GM12878 (cell line): ENCODE measurements at regions of chr15 and their contacts with region 1.

Region 1: GRCh38 chr15:69679623-69680228 is 227.1 kb downstream of the RPLP1 start:
- DNase-seq: peak; percentile 89
- ATAC-seq: peak; percentile 98
- H3K4me3 ChIP-seq: no peak overlapping the region
- H3K27ac ChIP-seq: no peak overlapping the region
- H3K4me1 ChIP-seq: peaks cover 21% of the 10 kb centered on the region
- H3K27me3 ChIP-seq: no peaks in the 10 kb centered on the region; a peak in 1 of 4 replicates
- CTCF ChIP-seq: no peak
- EP300 ChIP-seq: peak; percentile 80 to 89; a peak in 3 of 4 replicates
- POLR2A ChIP-seq: no peak
- RAD21 ChIP-seq: no peak

Region 2: DNA sequence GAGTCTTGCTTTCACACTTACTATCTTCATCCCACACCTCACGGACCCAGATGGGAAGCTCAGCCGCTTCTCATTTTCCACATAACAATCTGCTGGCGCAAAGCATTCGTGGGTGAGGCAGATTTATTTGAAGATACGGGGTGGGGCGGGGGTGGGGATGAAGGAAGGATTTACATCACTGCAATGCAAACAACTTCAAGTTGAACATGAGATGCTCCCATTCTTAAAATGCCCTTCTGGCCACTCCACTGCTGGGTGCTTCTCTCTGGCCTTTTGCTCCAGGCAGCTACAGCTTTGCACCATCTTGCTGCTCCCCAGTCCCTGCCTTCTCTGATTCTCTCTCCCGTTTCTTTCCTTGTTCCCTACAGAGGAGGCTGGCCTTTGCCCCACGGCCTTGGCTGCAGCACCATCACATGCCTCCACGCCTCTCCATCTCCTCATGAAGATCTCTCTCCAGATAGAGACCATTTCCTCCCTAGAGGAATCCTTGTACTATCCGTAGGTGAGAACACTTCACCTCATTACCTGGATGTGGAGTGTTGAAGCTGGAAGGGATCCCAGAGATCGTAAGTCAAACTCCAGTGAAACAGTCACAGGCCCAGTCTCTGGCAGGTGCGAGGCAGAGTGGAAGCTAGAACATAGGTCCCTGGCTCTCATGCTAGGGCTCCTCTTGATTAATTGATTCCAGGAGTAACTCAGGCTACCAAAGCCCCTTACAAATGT is 51.2 kb before region 1 on chr15:
- CTCF ChIA-PET with region 1: no interaction called
- POLR2A ChIA-PET with region 1: no interaction called
- RAD21 ChIA-PET with region 1: interaction called, 11 read pairs
- SMC1A ChIA-PET with region 1: interaction called, 3 read pairs
- in situ Hi-C with region 1: no loop called
- intact Hi-C with region 1: no loop called
- DNase-seq: no peak
- ATAC-seq: no peak
- H3K4me3 ChIP-seq: no peak overlapping the region
- H3K27ac ChIP-seq: no peak overlapping the region
- H3K4me1 ChIP-seq: no peaks in the 10 kb centered on the region
- H3K27me3 ChIP-seq: peaks cover 0 to 8% of the 10 kb centered on the region in 2 experiments; a peak in 3 of 4 replicates
- CTCF ChIP-seq: no peak
- EP300 ChIP-seq: no peak
- POLR2A ChIP-seq: no peak
- RAD21 ChIP-seq: no peak

Region 3: DNA sequence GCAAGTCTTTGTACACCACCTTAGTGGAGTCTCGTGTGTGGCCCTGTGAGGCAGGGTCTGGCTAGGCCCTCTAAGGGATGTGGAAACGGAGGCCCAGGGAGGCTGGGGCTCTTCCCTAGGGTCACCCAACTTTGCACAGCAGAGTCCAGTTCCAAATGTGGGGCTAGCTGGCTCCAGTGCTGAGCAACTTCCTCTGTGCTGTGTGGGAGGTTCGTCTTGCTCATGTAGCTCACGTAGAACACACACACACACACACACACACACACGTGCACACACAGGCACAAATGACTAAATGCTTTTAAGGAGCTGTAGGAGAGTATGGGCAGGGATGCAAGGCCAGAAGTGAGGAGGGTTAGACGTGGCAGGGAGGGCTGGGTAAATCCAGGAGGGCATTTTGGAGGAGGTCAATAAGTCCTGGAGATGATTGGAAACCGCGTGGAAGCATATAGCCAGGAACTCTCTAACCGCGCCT is 13.3 kb before region 1 on chr15:
- CTCF ChIA-PET with region 1: interaction called, 13 read pairs
- POLR2A ChIA-PET with region 1: interaction called, 7 read pairs
- RAD21 ChIA-PET with region 1: interaction called, 47 read pairs
- SMC1A ChIA-PET with region 1: interaction called, 58 read pairs
- in situ Hi-C with region 1: no loop called
- intact Hi-C with region 1: no loop called
- DNase-seq: no peak
- ATAC-seq: peak; percentile 30
- H3K4me3 ChIP-seq: peak overlapping the region; percentile 52; the same call in 1 of the 2 replicates
- H3K27ac ChIP-seq: peak overlapping the region; percentile 87
- H3K4me1 ChIP-seq: peaks cover 54% of the 10 kb centered on the region
- H3K27me3 ChIP-seq: no peaks in the 10 kb centered on the region; a peak in 2 of 4 replicates
- CTCF ChIP-seq: no peak
- EP300 ChIP-seq: no peak
- POLR2A ChIP-seq: no peak
- RAD21 ChIP-seq: no peak

Region 4: GRCh38 chr15:69713726-69714559 is 34.2 kb after region 1 on chr15:
- CTCF ChIA-PET with region 1: no interaction called
- POLR2A ChIA-PET with region 1: interaction called, 5 read pairs
- RAD21 ChIA-PET with region 1: interaction called, 6 read pairs
- SMC1A ChIA-PET with region 1: interaction called, 10 read pairs
- in situ Hi-C with region 1: no loop called
- intact Hi-C with region 1: no loop called
- DNase-seq: peak; percentile 88
- ATAC-seq: peak; percentile 96
- H3K4me3 ChIP-seq: no peak overlapping the region
- H3K27ac ChIP-seq: no peak overlapping the region
- H3K4me1 ChIP-seq: peaks cover 27% of the 10 kb centered on the region
- H3K27me3 ChIP-seq: no peaks in the 10 kb centered on the region
- CTCF ChIP-seq: no peak
- EP300 ChIP-seq: peak; percentile 80 to 89; a peak in 3 of 4 replicates
- POLR2A ChIP-seq: no peak
- RAD21 ChIP-seq: no peak

Region 5: DNA sequence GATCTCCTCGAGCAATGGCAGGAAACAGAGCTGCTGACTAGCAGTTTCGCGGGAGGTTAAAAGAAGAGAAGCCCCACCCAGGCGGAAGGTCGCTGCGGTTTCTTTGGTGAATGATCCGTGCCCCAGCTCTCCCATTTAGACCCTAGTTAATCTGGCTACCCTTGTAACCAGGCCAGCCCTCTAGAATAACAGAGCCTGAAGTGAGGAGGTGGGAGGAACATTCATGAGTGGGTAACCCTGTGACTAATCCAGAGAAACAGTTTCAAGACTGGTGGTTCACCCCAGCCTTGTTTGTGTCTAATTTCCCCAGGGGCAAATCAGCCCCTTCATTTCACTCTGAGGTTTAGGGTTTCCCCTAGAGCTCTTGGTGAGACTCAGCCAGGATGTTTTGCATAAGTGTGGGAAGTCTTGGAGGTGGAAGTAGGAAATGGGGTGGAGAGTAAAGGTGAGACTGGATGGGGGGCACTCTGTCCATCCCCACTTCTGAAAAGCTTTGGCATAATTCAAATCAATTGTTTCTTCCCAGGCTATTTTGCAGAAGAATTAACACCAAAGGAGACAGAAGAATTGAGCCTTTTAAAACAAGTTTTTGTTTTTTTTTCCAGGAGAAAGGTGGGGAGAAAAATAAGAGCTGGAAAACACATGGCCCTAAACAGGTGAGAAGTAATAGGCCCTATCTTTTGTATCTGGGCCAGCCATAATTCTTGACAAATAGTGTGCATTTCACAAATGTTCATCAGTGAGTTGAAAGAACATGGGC is 76.0 kb after region 1 on chr15:
- CTCF ChIA-PET with region 1: interaction called, 4 read pairs
- POLR2A ChIA-PET with region 1: interaction called, 3 read pairs
- RAD21 ChIA-PET with region 1: interaction called, 7 read pairs
- SMC1A ChIA-PET with region 1: interaction called, 9 read pairs
- in situ Hi-C with region 1: no loop called
- intact Hi-C with region 1: loop called (anchors 2 kb)
- DNase-seq: peak; percentile 93
- ATAC-seq: peak; percentile 93
- H3K4me3 ChIP-seq: no peak overlapping the region
- H3K27ac ChIP-seq: no peak overlapping the region
- H3K4me1 ChIP-seq: peaks cover 37% of the 10 kb centered on the region
- H3K27me3 ChIP-seq: no peaks in the 10 kb centered on the region
- CTCF ChIP-seq: no peak
- EP300 ChIP-seq: peak; percentile 77 to 85; a peak in 3 of 4 replicates
- POLR2A ChIP-seq: no peak
- RAD21 ChIP-seq: no peak

Region 6: DNA sequence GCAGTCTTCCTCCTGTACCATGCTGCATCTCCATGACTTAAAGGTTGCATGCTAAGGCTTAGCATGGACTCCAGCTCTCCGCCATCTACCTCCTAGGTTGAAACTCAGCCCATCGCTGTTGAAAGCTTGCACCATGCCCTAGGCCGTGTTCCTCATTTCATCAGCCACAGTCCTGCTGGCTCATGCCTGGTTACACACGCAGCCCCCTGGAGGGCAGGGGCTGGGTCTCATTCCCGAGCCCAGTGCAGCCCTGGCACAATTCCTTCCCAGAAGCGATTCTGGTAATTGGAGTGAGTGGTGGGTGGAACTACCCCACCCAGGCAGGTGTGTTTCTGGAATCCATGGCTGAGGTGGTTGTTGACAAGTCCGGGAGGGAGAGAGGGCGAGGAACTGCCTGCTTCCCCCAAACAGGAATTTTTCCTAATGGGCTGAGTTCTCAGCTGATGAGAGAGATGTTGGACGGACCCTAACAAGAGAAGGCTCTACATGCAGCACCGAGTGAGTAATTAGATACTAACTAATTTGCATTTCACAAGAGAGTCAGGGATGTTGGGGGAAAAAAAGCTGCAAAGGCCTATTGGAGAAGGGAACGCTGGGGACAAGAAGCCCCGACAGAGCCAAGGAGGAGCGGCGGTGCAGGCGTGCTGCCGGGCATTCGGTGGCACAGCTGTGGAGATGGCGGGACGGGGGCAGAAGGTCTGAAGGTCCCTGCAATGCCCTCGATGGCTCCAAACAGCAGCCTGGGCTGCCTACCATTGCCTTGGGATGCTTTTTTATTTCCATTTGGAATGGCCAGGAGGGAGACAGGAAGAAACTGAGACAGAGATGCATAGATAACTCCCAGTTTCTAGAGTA is 510.3 kb after region 1 on chr15:
- CTCF ChIA-PET with region 1: no interaction called
- POLR2A ChIA-PET with region 1: no interaction called
- RAD21 ChIA-PET with region 1: no interaction called
- SMC1A ChIA-PET with region 1: no interaction called
- in situ Hi-C with region 1: no loop called
- intact Hi-C with region 1: no loop called
- DNase-seq: no peak
- ATAC-seq: no peak
- H3K4me3 ChIP-seq: no peak overlapping the region
- H3K27ac ChIP-seq: no peak overlapping the region
- H3K4me1 ChIP-seq: no peaks in the 10 kb centered on the region
- H3K27me3 ChIP-seq: peaks cover 0 to 2% of the 10 kb centered on the region in 2 experiments; a peak in 2 of 4 replicates
- CTCF ChIP-seq: no peak
- EP300 ChIP-seq: no peak
- POLR2A ChIP-seq: no peak
- RAD21 ChIP-seq: no peak